ENCODE measurements at regions of chr19 and their contacts with region 1.

Region 1: DNA sequence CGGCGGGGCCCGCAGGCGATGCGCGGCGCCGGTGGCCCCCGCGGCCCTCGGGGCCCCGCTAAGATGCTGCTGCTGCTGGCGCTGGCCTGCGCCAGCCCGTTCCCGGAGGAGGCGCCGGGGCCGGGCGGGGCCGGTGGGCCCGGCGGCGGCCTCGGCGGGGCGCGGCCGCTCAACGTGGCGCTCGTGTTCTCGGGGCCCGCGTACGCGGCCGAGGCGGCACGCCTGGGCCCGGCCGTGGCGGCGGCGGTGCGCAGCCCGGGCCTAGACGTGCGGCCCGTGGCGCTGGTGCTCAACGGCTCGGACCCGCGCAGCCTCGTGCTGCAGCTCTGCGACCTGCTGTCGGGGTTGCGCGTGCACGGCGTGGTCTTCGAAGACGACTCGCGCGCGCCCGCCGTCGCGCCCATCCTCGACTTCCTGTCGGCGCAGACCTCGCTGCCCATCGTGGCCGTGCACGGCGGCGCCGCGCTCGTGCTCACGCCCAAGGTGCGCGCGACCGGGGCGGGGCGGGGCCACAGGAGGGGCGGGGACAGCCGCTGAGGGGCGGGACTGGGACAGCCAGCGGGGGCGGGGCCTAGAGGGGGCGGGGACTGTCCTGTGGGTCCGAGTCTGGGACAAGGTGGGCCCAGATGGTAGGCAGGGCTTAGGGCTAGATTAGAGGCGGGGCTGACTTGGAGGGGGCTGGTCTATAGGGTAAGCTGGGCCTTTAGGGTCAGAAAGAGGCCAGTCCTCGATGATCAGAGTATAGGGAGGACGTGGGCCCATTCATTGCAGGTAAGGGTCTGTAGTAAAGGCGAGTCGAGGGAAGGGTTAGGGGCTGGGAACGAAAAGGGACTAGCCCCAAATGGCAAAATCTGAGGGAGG is 5.1 kb downstream of the GRIN2D start:
- DNase-seq: peak; percentile 94 to 98 (median 96)
- ATAC-seq: peak; percentile 89
- H3K4me3 ChIP-seq: peak overlapping the region; percentile 75
- H3K27ac ChIP-seq: peak overlapping the region; percentile 85
- H3K4me1 ChIP-seq: peaks cover 41 to 68% of the 10 kb centered on the region in 2 experiments
- H3K27me3 ChIP-seq: no peaks in the 10 kb centered on the region
- CTCF ChIP-seq: no peak
- EP300 ChIP-seq: no peak
- POLR2A ChIP-seq: peak; percentile 98
- RAD21 ChIP-seq: no peak

Region 2: DNA sequence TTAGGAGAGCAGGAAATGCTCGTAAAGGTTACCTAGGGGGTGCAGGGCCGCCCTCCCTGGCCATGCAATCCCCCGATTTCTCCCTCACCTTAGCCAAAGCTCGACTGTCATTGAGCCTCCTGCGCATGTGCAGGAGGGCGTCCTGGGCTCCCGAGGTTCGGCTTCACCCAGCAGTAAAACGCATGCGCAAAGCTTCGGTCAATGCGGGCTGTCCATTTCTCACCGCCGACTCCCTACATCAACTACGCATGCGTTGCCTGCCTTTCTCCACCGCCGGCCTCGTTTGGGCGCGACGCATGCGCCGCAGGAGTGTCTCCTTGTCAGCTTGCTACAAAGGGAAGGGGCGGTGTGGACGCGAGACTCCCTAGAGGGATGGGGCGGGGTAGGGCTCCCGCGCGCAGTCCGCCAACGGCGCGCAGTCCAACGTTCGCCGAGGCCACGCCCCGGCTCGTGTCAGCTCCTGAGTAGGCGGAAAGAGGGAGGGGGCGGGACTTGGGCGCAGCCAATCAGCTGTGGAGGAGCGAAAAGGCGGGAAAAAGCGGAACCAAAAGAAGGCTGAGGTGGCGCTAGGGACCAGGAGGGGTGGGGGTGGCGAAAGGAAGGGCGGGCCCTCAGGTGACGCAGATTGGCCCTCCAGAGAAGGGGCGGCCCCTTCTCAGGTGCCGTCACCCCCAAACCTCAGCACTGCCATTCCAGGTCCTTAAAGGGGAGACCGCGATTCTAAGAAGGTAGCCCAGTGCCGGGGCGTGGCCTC is 34.6 kb before region 1 on chr19 and contains the starts of genes SYNGR4 and TMEM143:
- CTCF ChIA-PET with region 1: no interaction called
- POLR2A ChIA-PET with region 1: interaction called, 4 read pairs
- in situ Hi-C with region 1: no loop called
- intact Hi-C with region 1: loop called (anchors 2 kb)
- DNase-seq: peak; percentile 98 to 100 (median 99)
- ATAC-seq: peak; percentile 95
- H3K4me3 ChIP-seq: peak within 1 kb of the TSS; percentile 52
- H3K27ac ChIP-seq: peak within 1 kb of the TSS; percentile 96
- H3K4me1 ChIP-seq: peaks cover 8 to 29% of the 10 kb centered on the region in 2 experiments
- H3K27me3 ChIP-seq: no peaks in the 10 kb centered on the region
- CTCF ChIP-seq: peak in 1 of 3 experiments; percentile 12; a peak in 1 of 6 replicates
- EP300 ChIP-seq: peak; percentile 63; the same call in 1 of the 2 replicates
- POLR2A ChIP-seq: 0 out of 2 replicates have a peak, but pooled peaks have one; percentile 13
- RAD21 ChIP-seq: no peak
- polyA plus RNA-seq, gene SYNGR4: 0.14 TPM in 1 of 2 experiments, not detected in the other
- polyA plus RNA-seq, gene TMEM143: 0.66 to 0.67 TPM

Region 3: GRCh38 chr19:48419158-48419920 is 20.7 kb after region 1 on chr19:
- CTCF ChIA-PET with region 1: no interaction called
- POLR2A ChIA-PET with region 1: interaction called, 9 read pairs
- in situ Hi-C with region 1: no loop called
- intact Hi-C with region 1: loop called (anchors 2 kb)
- DNase-seq: peak; percentile 56 to 70 (median 66)
- ATAC-seq: peak; percentile 69
- H3K4me3 ChIP-seq: no peak overlapping the region
- H3K27ac ChIP-seq: peak overlapping the region; percentile 56; the same call in 1 of the 3 replicates
- H3K4me1 ChIP-seq: peaks cover 17 to 50% of the 10 kb centered on the region in 2 experiments
- H3K27me3 ChIP-seq: no peaks in the 10 kb centered on the region
- CTCF ChIP-seq: no peak
- EP300 ChIP-seq: no peak
- POLR2A ChIP-seq: no peak
- RAD21 ChIP-seq: no peak

Region 4: GRCh38 chr19:48468775-48469288 is 70.2 kb after region 1 on chr19:
- CTCF ChIA-PET with region 1: no interaction called
- POLR2A ChIA-PET with region 1: interaction called, 7 read pairs
- in situ Hi-C with region 1: no loop called
- intact Hi-C with region 1: loop called (anchors 2 kb)
- DNase-seq: peak; percentile 95 to 100 (median 97)
- ATAC-seq: peak; percentile 97
- H3K4me3 ChIP-seq: peak overlapping the region; percentile 91
- H3K27ac ChIP-seq: peak overlapping the region; percentile 98
- H3K4me1 ChIP-seq: peaks cover 7 to 24% of the 10 kb centered on the region in 2 experiments; a peak in 4 of 5 replicates
- H3K27me3 ChIP-seq: no peaks in the 10 kb centered on the region
- CTCF ChIP-seq: no peak; a peak in 1 of 6 replicates
- EP300 ChIP-seq: no peak
- POLR2A ChIP-seq: no peak
- RAD21 ChIP-seq: no peak

Measured in K562 (cell line).